ENCODE measurements at regions of chr15 and their contacts with region 1.

Region 1: GRCh38 chr15:37100109-37100965 is at the start of gene MEIS2:
- DNase-seq: peak; percentile 89
- H3K4me3 ChIP-seq: peak within 1 kb of the TSS; percentile 87
- H3K27ac ChIP-seq: peak within 1 kb of the TSS; percentile 96
- H3K4me1 ChIP-seq: peaks cover 21% of the 10 kb centered on the region
- CTCF ChIP-seq: no peak
- total RNA-seq, gene MEIS2: 31.7 and 35.8 TPM in 2 replicates

Region 2: DNA sequence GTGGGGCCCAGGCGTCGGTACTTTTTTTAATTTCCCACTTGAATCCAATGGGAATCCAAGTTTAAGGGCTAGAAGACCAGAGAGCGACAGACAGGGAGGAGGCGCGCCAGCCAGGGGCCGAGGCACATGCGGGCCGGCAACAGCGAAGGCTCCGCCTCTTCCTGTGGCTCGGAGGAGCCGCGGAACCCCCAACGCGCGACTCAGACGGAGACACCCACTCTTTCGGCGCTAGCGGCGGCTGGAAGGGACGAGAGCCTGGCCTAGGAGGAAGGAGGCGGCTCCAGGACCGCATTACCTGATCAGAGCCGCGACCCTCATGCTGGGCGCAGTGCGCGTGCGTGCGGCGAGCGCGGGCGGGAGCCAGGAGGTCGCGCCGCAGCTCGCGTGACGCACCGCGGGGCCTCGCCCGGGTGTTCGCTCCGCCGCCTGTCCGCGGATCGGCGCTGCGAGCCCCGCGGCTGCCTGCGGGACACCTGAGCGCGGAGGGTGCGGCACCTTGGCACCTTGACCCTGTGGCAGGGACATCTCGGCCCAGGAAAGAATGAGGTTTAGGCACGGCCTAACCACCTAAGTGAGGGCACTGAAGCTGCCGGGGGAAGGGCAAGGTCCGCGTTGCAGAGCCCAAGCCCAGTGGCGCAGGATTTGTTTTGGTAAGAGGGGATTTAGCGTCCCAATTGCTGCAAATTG is 1554.4 kb before region 1 on chr15 and contains the start of gene DPH6:
- CTCF ChIA-PET with region 1: no interaction called
- POLR2A ChIA-PET with region 1: no interaction called
- intact Hi-C with region 1: loop called (anchors 5 kb)
- DNase-seq: peak; percentile 86
- H3K4me3 ChIP-seq: peak within 1 kb of the TSS; percentile 85
- H3K27ac ChIP-seq: peak within 1 kb of the TSS; percentile 81
- H3K4me1 ChIP-seq: peaks cover 15% of the 10 kb centered on the region
- CTCF ChIP-seq: no peak
- total RNA-seq, gene DPH6: 12.6 and 26.4 TPM in 2 replicates

Region 3: DNA sequence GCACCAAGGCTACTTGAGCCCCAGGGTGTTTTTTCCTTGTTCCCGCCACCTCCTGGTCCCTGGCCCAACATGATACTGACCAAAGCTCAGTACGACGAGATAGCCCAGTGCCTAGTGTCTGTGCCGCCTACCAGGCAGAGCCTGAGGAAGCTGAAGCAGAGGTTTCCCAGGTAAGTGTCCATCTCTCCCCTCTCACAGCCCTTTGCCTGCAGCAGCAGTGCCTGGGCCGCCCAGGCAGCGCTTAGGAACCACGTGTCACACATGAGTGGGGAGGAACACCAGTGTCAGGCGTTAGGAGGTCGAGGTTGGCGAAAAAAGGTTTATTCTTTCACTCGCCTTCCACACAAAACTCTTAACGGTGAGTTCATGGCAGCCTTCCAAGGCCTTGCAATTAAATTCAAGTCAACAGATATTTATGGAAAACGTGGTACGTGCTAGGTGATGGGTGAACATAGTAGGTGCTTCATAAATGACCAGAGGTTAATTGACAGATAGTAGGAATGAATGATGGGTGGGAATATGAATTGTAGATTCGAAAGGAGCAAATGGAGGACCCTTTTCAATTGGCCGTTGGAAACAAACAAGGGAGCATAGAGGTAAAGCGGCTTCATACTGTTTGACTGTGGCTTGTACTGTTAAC is 520.4 kb before region 1 on chr15:
- CTCF ChIA-PET with region 1: no interaction called
- POLR2A ChIA-PET with region 1: interaction called, 3 read pairs
- intact Hi-C with region 1: loop called (anchors 2 kb)
- DNase-seq: peak; percentile 42
- H3K4me3 ChIP-seq: peak overlapping the region; percentile 74
- H3K27ac ChIP-seq: peak overlapping the region; percentile 21
- H3K4me1 ChIP-seq: peaks cover 18% of the 10 kb centered on the region
- CTCF ChIP-seq: no peak

Region 4: GRCh38 chr15:37034835-37035748 is 65.2 kb before region 1 on chr15:
- CTCF ChIA-PET with region 1: no interaction called
- POLR2A ChIA-PET with region 1: interaction called, 4 read pairs
- intact Hi-C with region 1: loop called (anchors 5 kb)
- DNase-seq: peak; percentile 85
- H3K4me3 ChIP-seq: no peak overlapping the region
- H3K27ac ChIP-seq: peak overlapping the region; percentile 81
- H3K4me1 ChIP-seq: peaks cover 30% of the 10 kb centered on the region
- CTCF ChIP-seq: no peak

Region 5: GRCh38 chr15:37166402-37166801 is 66.1 kb after region 1 on chr15:
- CTCF ChIA-PET with region 1: no interaction called
- POLR2A ChIA-PET with region 1: no interaction called
- intact Hi-C with region 1: no loop called
- DNase-seq: no peak
- H3K4me3 ChIP-seq: no peak overlapping the region
- H3K27ac ChIP-seq: no peak overlapping the region
- H3K4me1 ChIP-seq: no peaks in the 10 kb centered on the region
- CTCF ChIP-seq: no peak